IMR-90 (cell line): ENCODE measurements at regions of chr15 and their contacts with region 1.

Region 1: DNA sequence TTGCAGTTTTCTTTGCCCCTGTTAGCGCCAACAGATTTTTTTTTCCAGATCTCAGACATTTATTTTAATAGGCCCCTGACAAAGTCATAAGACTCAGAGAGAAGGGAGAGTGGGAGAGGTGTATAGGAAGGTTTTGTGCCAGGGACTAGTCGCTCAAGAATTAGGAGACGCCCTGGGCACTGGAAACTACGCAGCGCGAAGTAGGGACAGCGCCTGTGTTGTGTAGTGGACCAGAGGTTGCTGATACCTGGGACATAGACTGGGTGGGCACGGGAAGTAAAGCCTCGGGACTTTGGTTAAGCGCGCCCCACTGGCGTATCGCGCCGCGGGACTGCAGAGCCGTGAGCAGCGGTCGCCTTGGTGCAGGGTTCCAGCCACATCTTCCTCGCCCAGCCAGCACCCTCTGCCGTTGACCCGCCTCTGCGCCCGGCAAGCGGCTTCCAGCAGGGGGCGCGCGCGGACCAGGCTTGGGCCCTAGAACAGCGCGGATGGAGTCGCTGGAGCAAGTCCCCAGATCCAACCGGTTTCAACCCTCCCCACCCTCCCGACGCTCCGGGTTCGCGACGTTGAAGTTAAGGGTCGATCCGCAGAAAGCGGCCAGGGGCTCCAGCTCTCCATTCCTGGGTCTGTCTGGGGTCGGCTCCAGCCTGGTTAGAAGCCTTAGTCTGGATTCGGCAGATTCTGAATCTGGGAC is 3.0 kb upstream of the ISLR2 start:
- DNase-seq: peak; percentile 75
- ATAC-seq: peak; percentile 98
- H3K4me3 ChIP-seq: peak overlapping the region; percentile 16; the same call in 1 of the 2 replicates
- H3K27ac ChIP-seq: no peak overlapping the region
- H3K4me1 ChIP-seq: no peaks in the 10 kb centered on the region; the same call in 1 of the 2 replicates
- H3K27me3 ChIP-seq: peaks cover 89% of the 10 kb centered on the region
- CTCF ChIP-seq: peak; percentile 99
- POLR2A ChIP-seq: 0 out of 2 replicates have a peak, but pooled peaks have one; percentile 37
- RAD21 ChIP-seq: peak; percentile 99

Region 2: DNA sequence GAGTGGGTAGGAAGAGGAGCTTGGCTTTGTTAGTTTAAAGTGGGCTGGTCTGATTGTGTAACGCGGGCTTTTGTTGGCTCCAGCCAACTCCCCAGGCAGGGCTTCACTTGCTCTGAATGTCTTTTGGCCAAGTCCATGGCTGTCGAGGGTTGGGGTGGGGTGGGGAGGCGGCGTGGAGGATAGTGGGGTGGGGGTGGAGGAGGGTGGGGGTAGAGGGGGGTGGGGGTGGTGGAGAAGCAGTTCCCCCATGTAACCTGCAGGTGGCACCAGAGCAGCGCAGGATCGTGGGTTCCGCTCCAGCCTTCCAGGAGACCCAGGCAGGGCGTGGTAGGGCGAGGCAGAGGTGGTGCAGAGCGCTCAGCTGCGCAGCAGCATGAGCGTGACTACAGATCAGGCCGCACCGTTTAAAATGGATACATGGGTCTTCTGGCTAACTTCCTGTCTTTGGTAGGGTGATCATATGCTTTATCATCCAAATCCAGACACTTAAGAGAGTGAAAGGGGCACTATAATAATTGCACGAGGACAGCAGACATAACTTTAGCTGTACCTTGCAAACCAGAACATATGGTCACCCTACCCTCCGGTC is 73.4 kb before region 1 on chr15:
- CTCF ChIA-PET with region 1: no interaction called
- POLR2A ChIA-PET with region 1: no interaction called
- dilution Hi-C with region 1: no loop called
- in situ Hi-C with region 1: loop called (anchors 5 kb)
- intact Hi-C with region 1: loop called (anchors 1 kb)
- DNase-seq: peak; percentile 44
- ATAC-seq: peak; percentile 73
- H3K4me3 ChIP-seq: no peak overlapping the region
- H3K27ac ChIP-seq: no peak overlapping the region
- H3K4me1 ChIP-seq: peaks cover 25% of the 10 kb centered on the region
- H3K27me3 ChIP-seq: peaks cover 7% of the 10 kb centered on the region
- CTCF ChIP-seq: peak; percentile 63
- POLR2A ChIP-seq: no peak
- RAD21 ChIP-seq: peak; percentile 78

Region 3: DNA sequence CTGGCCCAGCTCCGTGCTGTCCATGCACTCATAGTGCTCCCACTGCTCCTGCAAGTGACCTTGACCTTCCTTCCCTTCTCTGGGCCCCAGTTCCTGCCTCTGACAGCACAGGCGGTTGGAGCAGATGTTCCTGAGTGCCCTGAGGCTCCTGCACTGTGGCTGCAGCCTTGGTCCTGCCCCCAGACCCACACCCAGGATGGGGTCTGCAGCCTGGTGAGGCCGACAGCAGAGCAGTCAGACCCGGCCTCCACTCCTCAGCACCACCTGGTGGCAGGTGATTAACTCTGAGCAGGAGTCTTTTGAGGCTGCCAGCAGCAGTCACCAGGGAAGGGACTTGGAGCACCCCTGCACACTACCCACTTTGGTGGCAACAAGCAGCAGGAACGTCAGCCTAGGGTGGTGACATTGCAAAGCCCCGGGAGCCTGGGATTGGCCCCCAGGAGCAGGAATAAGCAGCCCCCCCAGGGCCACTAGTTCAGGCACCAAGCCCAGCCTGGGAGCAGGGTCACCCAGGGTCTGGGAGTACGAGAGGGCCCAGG is 175.5 kb after region 1 on chr15:
- CTCF ChIA-PET with region 1: interaction called, 8 read pairs
- POLR2A ChIA-PET with region 1: no interaction called
- dilution Hi-C with region 1: no loop called
- in situ Hi-C with region 1: loop called (anchors 5 kb)
- intact Hi-C with region 1: loop called (anchors 1 kb)
- DNase-seq: no peak
- ATAC-seq: peak; percentile 63
- H3K4me3 ChIP-seq: no peak overlapping the region
- H3K27ac ChIP-seq: no peak overlapping the region
- H3K4me1 ChIP-seq: no peaks in the 10 kb centered on the region
- H3K27me3 ChIP-seq: peaks cover 87% of the 10 kb centered on the region
- CTCF ChIP-seq: peak; percentile 49
- POLR2A ChIP-seq: no peak
- RAD21 ChIP-seq: peak; percentile 61

Region 4: DNA sequence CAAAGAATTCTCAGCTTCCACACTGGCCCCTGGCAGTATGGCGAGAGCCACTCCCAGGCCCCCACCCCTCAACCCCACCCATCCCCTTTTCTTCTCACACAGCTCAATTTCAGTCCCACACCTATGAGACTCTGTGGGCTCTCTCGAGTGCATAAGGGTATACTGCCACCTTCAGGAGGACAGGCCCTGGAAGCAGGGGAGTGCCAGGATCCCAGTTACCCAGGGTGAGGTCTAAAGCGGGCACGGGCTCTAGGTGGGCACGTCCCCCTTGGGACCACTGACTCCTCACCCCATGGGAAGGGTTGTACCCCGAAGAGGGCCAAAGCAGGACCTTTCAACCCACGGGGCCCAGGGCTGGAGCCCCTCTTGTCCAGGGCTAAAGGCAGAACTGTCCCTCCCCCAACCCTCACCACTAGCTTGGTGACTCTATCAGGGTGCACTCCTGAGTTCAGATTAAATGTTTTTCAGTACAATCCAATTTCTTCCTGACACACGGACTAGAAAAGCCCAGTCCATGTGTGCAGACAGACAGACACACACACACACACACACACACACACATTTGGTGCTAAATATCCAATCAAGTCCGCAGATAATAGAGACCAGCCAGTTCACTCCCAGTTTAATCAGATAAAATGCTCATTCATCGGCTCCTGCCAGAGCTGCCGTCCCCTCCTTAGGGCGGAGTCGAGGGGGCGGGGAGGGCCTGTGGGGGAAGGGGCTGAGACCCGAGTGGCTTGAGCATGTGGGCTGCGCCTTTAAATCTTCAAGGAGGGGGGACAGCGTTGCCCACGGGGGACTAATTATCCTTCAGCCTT is 180.6 kb after region 1 on chr15:
- CTCF ChIA-PET with region 1: interaction called, 8 read pairs
- POLR2A ChIA-PET with region 1: no interaction called
- dilution Hi-C with region 1: no loop called
- in situ Hi-C with region 1: loop called (anchors 5 kb)
- intact Hi-C with region 1: loop called (anchors 1 kb)
- DNase-seq: peak; percentile 52
- ATAC-seq: peak; percentile 92
- H3K4me3 ChIP-seq: no peak overlapping the region
- H3K27ac ChIP-seq: no peak overlapping the region
- H3K4me1 ChIP-seq: no peaks in the 10 kb centered on the region
- H3K27me3 ChIP-seq: peaks cover 85% of the 10 kb centered on the region
- CTCF ChIP-seq: peak; percentile 82
- POLR2A ChIP-seq: no peak
- RAD21 ChIP-seq: peak; percentile 86

Region 5: GRCh38 chr15:74322181-74323076 is 195.0 kb after region 1 on chr15:
- CTCF ChIA-PET with region 1: interaction called, 4 read pairs
- POLR2A ChIA-PET with region 1: no interaction called
- dilution Hi-C with region 1: no loop called
- in situ Hi-C with region 1: no loop called
- intact Hi-C with region 1: loop called (anchors 1 kb)
- DNase-seq: peak; percentile 58
- ATAC-seq: peak; percentile 87
- H3K4me3 ChIP-seq: no peak overlapping the region
- H3K27ac ChIP-seq: no peak overlapping the region
- H3K4me1 ChIP-seq: peaks cover 10% of the 10 kb centered on the region; the same call in 1 of the 2 replicates
- H3K27me3 ChIP-seq: peaks cover 22% of the 10 kb centered on the region
- CTCF ChIP-seq: peak; percentile 96
- POLR2A ChIP-seq: peak; percentile 36; the same call in 1 of the 2 replicates
- RAD21 ChIP-seq: peak; percentile 98

Region 6: GRCh38 chr15:74620636-74621545 is 493.5 kb after region 1 on chr15:
- CTCF ChIA-PET with region 1: no interaction called
- POLR2A ChIA-PET with region 1: no interaction called
- dilution Hi-C with region 1: no loop called
- in situ Hi-C with region 1: no loop called
- intact Hi-C with region 1: no loop called
- DNase-seq: peak; percentile 64
- ATAC-seq: peak; percentile 71
- H3K4me3 ChIP-seq: no peak overlapping the region
- H3K27ac ChIP-seq: no peak overlapping the region
- H3K4me1 ChIP-seq: peaks cover 6% of the 10 kb centered on the region
- H3K27me3 ChIP-seq: no peaks in the 10 kb centered on the region
- CTCF ChIP-seq: peak; percentile 99
- POLR2A ChIP-seq: no peak
- RAD21 ChIP-seq: peak; percentile 71